ENCODE measurements at regions of chr15 and their contacts with region 1.

Region 1: GRCh38 chr15:42819786-42820185 is 82.9 kb upstream of the CDAN1 start:
- DNase-seq: no peak
- H3K4me3 ChIP-seq: no peak overlapping the region
- H3K27ac ChIP-seq: no peak overlapping the region
- H3K4me1 ChIP-seq: no peaks in the 10 kb centered on the region
- H3K27me3 ChIP-seq: no peaks in the 10 kb centered on the region
- CTCF ChIP-seq: no peak

Region 2: GRCh38 chr15:42919769-42920518 is 100.2 kb after region 1 on chr15:
- CTCF ChIA-PET with region 1: no interaction called
- POLR2A ChIA-PET with region 1: no interaction called
- intact Hi-C with region 1: loop called (anchors 5 kb)
- DNase-seq: peak in 1 of 2 experiments; percentile 21
- H3K4me3 ChIP-seq: peak overlapping the region; percentile 69
- H3K27ac ChIP-seq: no peak overlapping the region
- H3K4me1 ChIP-seq: peaks cover 15% of the 10 kb centered on the region; the same call in 1 of the 2 replicates
- H3K27me3 ChIP-seq: no peaks in the 10 kb centered on the region
- CTCF ChIP-seq: no peak

Measured in PC-9 (cell line).